ENCODE measurements at regions of chr13 and their contacts with region 1.

Region 1: GRCh38 chr13:20940083-20940880 is 37.7 kb upstream of the XPO4 start:
- DNase-seq: no peak
- H3K4me3 ChIP-seq: no peak overlapping the region
- H3K27ac ChIP-seq: no peak overlapping the region
- H3K4me1 ChIP-seq: no peaks in the 10 kb centered on the region
- H3K27me3 ChIP-seq: no peaks in the 10 kb centered on the region
- CTCF ChIP-seq: no peak
- POLR2A ChIP-seq: no peak

Region 2: DNA sequence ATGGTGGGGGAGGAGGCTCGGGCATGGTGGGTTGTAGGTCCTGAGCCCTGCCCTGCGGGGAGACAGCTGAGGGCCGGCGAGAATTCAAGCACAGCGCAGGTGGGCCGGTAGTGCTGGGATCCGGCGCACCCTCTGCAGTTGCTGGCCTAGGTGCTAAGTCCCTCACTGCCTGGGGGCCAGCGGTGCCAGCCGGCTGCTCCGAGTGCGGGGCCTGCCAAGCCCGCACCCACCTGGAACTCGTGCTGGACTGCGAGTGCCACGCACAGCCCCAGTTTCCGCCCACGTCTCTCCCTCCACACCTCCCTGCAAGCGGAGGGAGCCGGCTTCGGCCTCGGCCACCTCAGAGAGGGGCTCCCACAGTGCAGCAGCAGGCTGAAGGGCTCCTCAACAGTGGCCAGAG is 200.3 kb before region 1 on chr13:
- CTCF ChIA-PET with region 1: no interaction called
- POLR2A ChIA-PET with region 1: no interaction called
- dilution Hi-C with region 1: no loop called
- intact Hi-C with region 1: no loop called
- DNase-seq: no peak
- H3K4me3 ChIP-seq: no peak overlapping the region
- H3K27ac ChIP-seq: no peak overlapping the region
- H3K4me1 ChIP-seq: no peaks in the 10 kb centered on the region
- H3K27me3 ChIP-seq: no peaks in the 10 kb centered on the region
- CTCF ChIP-seq: no peak
- POLR2A ChIP-seq: no peak

Region 3: GRCh38 chr13:21137696-21138095 is 197.4 kb after region 1 on chr13:
- CTCF ChIA-PET with region 1: interaction called, 44 read pairs
- POLR2A ChIA-PET with region 1: no interaction called
- dilution Hi-C with region 1: no loop called
- intact Hi-C with region 1: loop called (anchors 1 kb)
- DNase-seq: no peak
- H3K4me3 ChIP-seq: no peak overlapping the region
- H3K27ac ChIP-seq: no peak overlapping the region
- H3K4me1 ChIP-seq: peaks cover 11% of the 10 kb centered on the region
- H3K27me3 ChIP-seq: no peaks in the 10 kb centered on the region
- CTCF ChIP-seq: no peak
- POLR2A ChIP-seq: no peak

Measured in endothelial cell of umbilical vein (primary cell).